ENCODE measurements at regions of chr1 and their contacts with region 1.

Region 1: DNA sequence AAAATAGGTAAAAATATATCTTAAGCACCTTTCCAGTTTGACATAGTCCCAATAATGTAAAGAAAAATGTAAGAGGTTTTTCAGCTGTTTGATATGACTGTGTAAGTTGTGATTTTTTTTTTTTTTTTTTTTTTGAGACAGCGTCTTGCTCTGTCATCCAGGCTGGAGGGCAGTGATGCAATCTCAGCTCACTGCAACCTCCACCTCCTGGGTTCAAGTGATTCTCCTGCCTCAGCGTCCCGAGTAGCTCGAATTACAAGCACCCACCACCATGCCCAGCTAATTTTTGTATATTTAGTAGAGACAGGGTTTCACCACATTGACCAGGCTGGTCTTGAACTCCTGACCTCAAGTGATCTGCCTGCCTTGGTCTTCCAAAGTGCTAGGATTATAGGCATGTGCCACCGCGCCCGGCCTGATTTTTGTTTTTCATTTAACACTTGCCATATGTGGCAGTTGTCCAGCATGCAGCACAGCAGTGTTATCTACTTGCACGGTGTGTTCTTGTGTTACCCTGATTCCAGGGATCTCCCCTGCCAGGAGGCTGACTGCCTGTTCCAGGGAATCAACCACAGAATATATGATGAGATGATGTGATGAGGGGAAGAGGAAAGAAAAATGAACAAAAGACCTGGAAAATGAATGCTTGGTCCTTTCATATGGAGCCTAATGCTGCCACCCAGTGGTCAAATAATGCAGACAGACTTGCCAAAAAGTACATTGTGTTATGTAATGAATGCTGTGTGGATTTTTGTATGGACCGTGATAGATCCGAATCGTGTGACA is 79.0 kb downstream of the RAVER2 start:
- DNase-seq: peak in 32 of 35 experiments; percentile 27 to 84 (median 51)
- ATAC-seq: peak in 3 of 4 experiments; percentile 54 to 65 (median 54)
- H3K4me3 ChIP-seq: no peak overlapping the region
- H3K4me3 Mint-ChIP-seq: peak overlapping the region in 1 of 3 donors; percentile 14
- H3K27ac ChIP-seq: no peak overlapping the region
- H3K27ac Mint-ChIP-seq: peak overlapping the region in 1 of 2 donors; percentile 42
- H3K4me1 ChIP-seq: peaks cover 7 to 12% of the 10 kb centered on the region in 2 experiments
- H3K4me1 Mint-ChIP-seq: peaks cover 30 to 31% (median 30%) of the 10 kb centered on the region in 3 donors
- H3K27me3 ChIP-seq: no peaks in the 10 kb centered on the region
- H3K27me3 Mint-ChIP-seq: no peaks in the 10 kb centered on the region

Region 2: GRCh38 chr1:64790832-64791487 is 32.9 kb before region 1 on chr1:
- CTCF ChIA-PET with region 1: no interaction called
- POLR2A ChIA-PET with region 1: no interaction called
- DNase-seq: no peak
- ATAC-seq: no peak
- H3K4me3 ChIP-seq: no peak overlapping the region
- H3K4me3 Mint-ChIP-seq: no peak overlapping the region
- H3K27ac ChIP-seq: no peak overlapping the region
- H3K27ac Mint-ChIP-seq: no peak overlapping the region
- H3K4me1 ChIP-seq: no peaks in the 10 kb centered on the region
- H3K4me1 Mint-ChIP-seq: no peaks in the 10 kb centered on the region
- H3K27me3 ChIP-seq: no peaks in the 10 kb centered on the region
- H3K27me3 Mint-ChIP-seq: no peaks in the 10 kb centered on the region

Region 3: DNA sequence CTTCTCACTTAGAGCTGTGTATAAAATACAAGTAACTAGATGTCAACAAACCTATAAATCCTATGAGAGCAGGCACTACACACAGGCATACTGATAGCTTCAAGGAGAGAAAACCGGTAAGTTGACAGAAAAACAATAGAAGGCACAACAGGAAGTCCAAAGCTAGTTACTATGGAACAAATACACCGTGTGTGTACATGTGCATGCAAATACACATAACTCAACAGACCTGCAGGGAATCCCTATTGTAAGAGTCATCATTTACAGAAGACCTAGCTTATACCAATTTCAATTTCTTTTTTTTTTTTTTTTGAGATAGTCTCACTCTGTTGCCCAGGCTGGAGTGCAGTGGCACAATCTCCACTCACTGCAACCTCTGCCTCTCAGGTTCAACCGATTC is 116.1 kb after region 1 on chr1:
- CTCF ChIA-PET with region 1: no interaction called
- POLR2A ChIA-PET with region 1: interaction called in 1 of 2 experiments, 12 read pairs
- DNase-seq: no peak
- ATAC-seq: peak in 2 of 4 experiments; percentile 55 to 59
- H3K4me3 ChIP-seq: no peak overlapping the region
- H3K4me3 Mint-ChIP-seq: peak overlapping the region; percentile 11 to 58 (median 14)
- H3K27ac ChIP-seq: no peak overlapping the region
- H3K27ac Mint-ChIP-seq: peak overlapping the region in 1 of 2 donors; percentile 31
- H3K4me1 ChIP-seq: peaks cover 12 to 32% of the 10 kb centered on the region in 2 experiments
- H3K4me1 Mint-ChIP-seq: peaks cover 79 to 82% (median 81%) of the 10 kb centered on the region in 3 donors
- H3K27me3 ChIP-seq: no peaks in the 10 kb centered on the region
- H3K27me3 Mint-ChIP-seq: no peaks in the 10 kb centered on the region